ENCODE measurements at regions of chr19 and their contacts with region 1.

Region 1: GRCh38 chr19:33235269-33235995 is 9.8 kb upstream of the SLC7A10 start:
- DNase-seq: no peak
- H3K4me3 ChIP-seq: no peak overlapping the region
- H3K27me3 ChIP-seq: peaks cover 6% of the 10 kb centered on the region; the same call in 1 of the 2 replicates
- CTCF ChIP-seq: peak; percentile 92

Region 2: GRCh38 chr19:33224694-33225457 is 10.6 kb before region 1 on chr19:
- CTCF ChIA-PET with region 1: interaction called, 12 read pairs
- POLR2A ChIA-PET with region 1: no interaction called
- DNase-seq: no peak
- H3K4me3 ChIP-seq: no peak overlapping the region
- H3K27me3 ChIP-seq: peaks cover 38% of the 10 kb centered on the region
- CTCF ChIP-seq: no peak

Region 3: GRCh38 chr19:33394006-33394849 is 158.8 kb after region 1 on chr19:
- CTCF ChIA-PET with region 1: interaction called, 405 read pairs
- POLR2A ChIA-PET with region 1: no interaction called
- DNase-seq: no peak
- H3K4me3 ChIP-seq: no peak overlapping the region
- H3K27me3 ChIP-seq: no peaks in the 10 kb centered on the region
- CTCF ChIP-seq: no peak